Naive thymus-derived CD4-positive, alpha-beta T cell (primary cell): ENCODE measurements at regions of chr10 and their contacts with region 1.

Region 1: DNA sequence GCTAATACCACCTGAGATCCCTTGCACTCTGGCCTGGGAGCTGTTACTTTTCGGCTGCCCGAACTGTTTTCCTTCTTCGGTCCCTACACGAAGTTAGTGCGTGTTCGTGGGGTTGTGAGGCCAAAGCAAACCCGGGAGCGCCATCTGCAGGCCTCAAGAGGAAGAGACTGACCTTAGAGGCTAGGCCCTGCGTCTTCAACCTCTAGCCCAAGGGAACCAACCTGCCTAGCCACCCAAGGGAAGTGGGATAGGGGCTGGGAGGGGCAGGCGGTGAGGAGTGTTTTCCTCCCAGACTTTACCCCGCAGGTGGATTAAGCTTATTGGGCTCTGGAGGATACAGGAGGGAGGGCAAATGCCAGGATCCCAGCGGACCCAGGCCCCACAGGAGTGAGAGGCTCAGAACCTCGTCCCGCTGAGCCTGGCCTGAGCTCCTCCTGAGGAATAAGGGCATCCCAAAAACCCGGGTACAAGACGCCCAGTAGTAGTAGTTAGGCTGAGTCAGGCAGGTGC is 1.7 kb upstream of the PAX2 start:
- DNase-seq: peak in 6 of 9 donors; percentile 41 to 48 (median 44)
- ATAC-seq: peak; percentile 72
- H3K4me3 ChIP-seq: no peak overlapping the region
- H3K4me3 Mint-ChIP-seq: peak overlapping the region; percentile 23 to 72 (median 58)
- H3K27ac ChIP-seq: no peak overlapping the region
- H3K27ac Mint-ChIP-seq: peak overlapping the region in 1 of 9 donors; percentile 61
- H3K4me1 ChIP-seq: peaks cover 4 to 17% of the 10 kb centered on the region in 2 donors
- H3K4me1 Mint-ChIP-seq: peaks cover 27 to 56% (median 36%) of the 10 kb centered on the region in 7 donors
- H3K27me3 ChIP-seq: peaks cover 10 to 27% of the 10 kb centered on the region in 2 donors
- H3K27me3 Mint-ChIP-seq: peaks cover 60 to 88% (median 66%) of the 10 kb centered on the region in 5 donors

Region 2: DNA sequence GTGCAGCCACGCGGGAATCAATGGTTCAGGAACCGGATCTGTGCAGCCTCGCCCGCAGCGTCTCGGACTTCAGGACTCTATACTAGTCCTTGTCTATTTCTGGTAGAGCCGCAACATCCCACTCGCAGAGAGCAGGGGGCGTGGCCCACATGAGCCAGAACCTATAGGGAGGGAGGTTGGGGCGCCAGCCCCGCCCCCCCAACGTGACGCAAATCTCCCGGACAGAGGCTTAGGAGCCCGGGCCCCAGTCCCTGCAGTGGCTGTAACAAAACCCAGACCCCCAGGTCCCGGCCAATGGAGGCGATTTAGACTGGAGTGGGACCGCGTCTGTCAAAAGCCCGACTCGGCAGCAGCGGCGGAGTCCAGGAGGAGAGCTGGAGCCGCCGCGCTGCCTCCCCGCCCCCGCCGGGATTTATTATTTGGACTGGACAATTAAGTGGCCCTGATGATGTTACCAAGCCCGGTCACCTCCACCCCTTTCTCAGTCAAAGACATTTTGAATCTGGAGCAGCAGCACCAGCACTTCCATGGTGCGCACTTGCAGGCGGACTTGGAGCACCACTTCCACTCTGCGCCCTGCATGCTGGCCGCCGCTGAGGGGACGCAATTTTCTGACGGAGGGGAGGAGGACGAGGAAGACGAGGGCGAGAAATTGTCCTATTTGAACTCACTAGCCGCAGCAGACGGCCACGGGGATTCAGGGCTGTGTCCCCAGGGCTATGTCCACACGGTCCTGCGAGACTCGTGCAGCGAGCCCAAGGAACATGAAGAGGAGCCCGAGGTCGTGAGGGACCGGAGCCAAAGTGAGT is 1210.8 kb before region 1 on chr10 and contains the start of gene NKX2-3:
- CTCF ChIA-PET with region 1: no interaction called
- POLR2A ChIA-PET with region 1: no interaction called
- intact Hi-C with region 1: loop called in 1 of 2 experiments (anchors 5 kb)
- DNase-seq: no peak
- ATAC-seq: peak; percentile 59
- H3K4me3 ChIP-seq: no peak within 1 kb of the TSS
- H3K4me3 Mint-ChIP-seq: peak within 1 kb of the TSS; percentile 18 to 70 (median 52)
- H3K27ac ChIP-seq: no peak within 1 kb of the TSS
- H3K27ac Mint-ChIP-seq: peak within 1 kb of the TSS in 1 of 9 donors; percentile 71
- H3K4me1 ChIP-seq: peaks cover 0 to 10% of the 10 kb centered on the region in 2 donors
- H3K4me1 Mint-ChIP-seq: peaks cover 33 to 65% (median 50%) of the 10 kb centered on the region in 7 donors
- H3K27me3 ChIP-seq: peaks cover 5 to 30% of the 10 kb centered on the region in 2 donors
- H3K27me3 Mint-ChIP-seq: peaks cover 73 to 94% (median 85%) of the 10 kb centered on the region in 5 donors
- total RNA-seq, gene NKX2-3: not detected

Region 3: GRCh38 chr10:100653957-100654781 is 89.5 kb before region 1 on chr10:
- CTCF ChIA-PET with region 1: no interaction called
- POLR2A ChIA-PET with region 1: no interaction called
- intact Hi-C with region 1: loop called in 1 of 2 experiments (anchors 5 kb)
- DNase-seq: peak in 1 of 9 donors; percentile 36
- ATAC-seq: peak; percentile 28
- H3K4me3 ChIP-seq: no peak overlapping the region
- H3K4me3 Mint-ChIP-seq: peak overlapping the region; percentile 64 to 92 (median 85)
- H3K27ac ChIP-seq: no peak overlapping the region
- H3K27ac Mint-ChIP-seq: no peak overlapping the region
- H3K4me1 ChIP-seq: peaks cover 4 to 16% of the 10 kb centered on the region in 2 donors
- H3K4me1 Mint-ChIP-seq: peaks cover 18 to 35% (median 27%) of the 10 kb centered on the region in 7 donors
- H3K27me3 ChIP-seq: peaks cover 19 to 27% of the 10 kb centered on the region in 2 donors
- H3K27me3 Mint-ChIP-seq: peaks cover 68 to 76% (median 75%) of the 10 kb centered on the region in 5 donors

Region 4: GRCh38 chr10:100827819-100828737 is 84.4 kb after region 1 on chr10:
- CTCF ChIA-PET with region 1: no interaction called
- POLR2A ChIA-PET with region 1: no interaction called
- intact Hi-C with region 1: loop called in 1 of 2 experiments (anchors 5 kb)
- DNase-seq: peak in 3 of 9 donors; percentile 18 to 36 (median 29)
- ATAC-seq: peak; percentile 37
- H3K4me3 ChIP-seq: peak overlapping the region; percentile 56
- H3K4me3 Mint-ChIP-seq: peak overlapping the region; percentile 85 to 97 (median 88)
- H3K27ac ChIP-seq: no peak overlapping the region
- H3K27ac Mint-ChIP-seq: peak overlapping the region in 2 of 9 donors; percentile 14 to 50
- H3K4me1 ChIP-seq: peaks cover 9% of the 10 kb centered on the region in 2 donors
- H3K4me1 Mint-ChIP-seq: peaks cover 25 to 45% (median 31%) of the 10 kb centered on the region in 7 donors
- H3K27me3 ChIP-seq: peaks cover 11 to 34% of the 10 kb centered on the region in 2 donors
- H3K27me3 Mint-ChIP-seq: peaks cover 26 to 86% (median 47%) of the 10 kb centered on the region in 5 donors

Region 5: GRCh38 chr10:101228153-101228973 is 484.7 kb after region 1 on chr10:
- CTCF ChIA-PET with region 1: no interaction called
- POLR2A ChIA-PET with region 1: no interaction called
- intact Hi-C with region 1: loop called in 1 of 2 experiments (anchors 5 kb)
- DNase-seq: no peak
- ATAC-seq: no peak
- H3K4me3 ChIP-seq: no peak overlapping the region
- H3K4me3 Mint-ChIP-seq: peak overlapping the region; percentile 42 to 80 (median 74)
- H3K27ac ChIP-seq: no peak overlapping the region
- H3K27ac Mint-ChIP-seq: peak overlapping the region in 1 of 9 donors; percentile 79
- H3K4me1 ChIP-seq: peaks cover 27 to 48% of the 10 kb centered on the region in 2 donors
- H3K4me1 Mint-ChIP-seq: peaks cover 26 to 52% (median 40%) of the 10 kb centered on the region in 7 donors
- H3K27me3 ChIP-seq: peaks cover 18 to 54% of the 10 kb centered on the region in 2 donors
- H3K27me3 Mint-ChIP-seq: peaks cover 71 to 78% (median 74%) of the 10 kb centered on the region in 5 donors